ENCODE measurements at regions of chr5 and their contacts with region 1.

Region 1: GRCh38 chr5:163408311-163408923 is 29.0 kb upstream of the CCNG1 start:
- H3K4me3 Mint-ChIP-seq: no peak overlapping the region
- H3K27ac Mint-ChIP-seq: no peak overlapping the region
- H3K4me1 Mint-ChIP-seq: peaks cover 20% of the 10 kb centered on the region
- H3K27me3 Mint-ChIP-seq: peaks cover under 1% of the 10 kb centered on the region

Region 2: DNA sequence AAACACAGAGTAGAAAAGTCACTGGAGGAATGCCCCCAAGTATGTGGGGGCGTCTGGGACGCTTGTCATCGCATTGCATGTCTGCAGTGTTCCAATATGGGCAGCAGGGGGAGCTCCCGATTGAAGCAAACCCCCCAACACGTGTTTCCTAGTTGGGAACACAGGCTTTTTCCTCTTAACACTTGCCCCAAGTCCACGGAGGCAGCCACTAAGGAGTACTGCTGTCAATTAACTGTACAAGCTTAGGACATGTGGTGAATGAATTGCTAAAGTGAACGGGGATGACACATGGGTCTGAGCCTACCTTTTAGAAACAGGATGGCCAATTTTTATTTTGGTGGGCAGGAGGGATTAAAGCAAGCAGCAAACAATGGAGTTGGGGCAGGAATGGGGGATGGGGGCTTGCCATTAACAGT is 1864.1 kb before region 1 on chr5:
- intact Hi-C with region 1: loop called (anchors 2 kb)
- H3K4me3 Mint-ChIP-seq: no peak overlapping the region
- H3K27ac Mint-ChIP-seq: no peak overlapping the region
- H3K4me1 Mint-ChIP-seq: peaks cover 26% of the 10 kb centered on the region
- H3K27me3 Mint-ChIP-seq: peaks cover 48% of the 10 kb centered on the region

Region 3: GRCh38 chr5:161851691-161852299 is 1556.6 kb before region 1 on chr5:
- intact Hi-C with region 1: loop called (anchors 10 kb)
- H3K4me3 Mint-ChIP-seq: no peak overlapping the region
- H3K27ac Mint-ChIP-seq: no peak overlapping the region
- H3K4me1 Mint-ChIP-seq: no peaks in the 10 kb centered on the region
- H3K27me3 Mint-ChIP-seq: peaks cover 28% of the 10 kb centered on the region

Region 4: GRCh38 chr5:162209005-162209605 is 1199.3 kb before region 1 on chr5:
- intact Hi-C with region 1: loop called (anchors 5 kb)
- H3K4me3 Mint-ChIP-seq: no peak overlapping the region
- H3K27ac Mint-ChIP-seq: no peak overlapping the region
- H3K4me1 Mint-ChIP-seq: no peaks in the 10 kb centered on the region
- H3K27me3 Mint-ChIP-seq: no peaks in the 10 kb centered on the region

Region 5: DNA sequence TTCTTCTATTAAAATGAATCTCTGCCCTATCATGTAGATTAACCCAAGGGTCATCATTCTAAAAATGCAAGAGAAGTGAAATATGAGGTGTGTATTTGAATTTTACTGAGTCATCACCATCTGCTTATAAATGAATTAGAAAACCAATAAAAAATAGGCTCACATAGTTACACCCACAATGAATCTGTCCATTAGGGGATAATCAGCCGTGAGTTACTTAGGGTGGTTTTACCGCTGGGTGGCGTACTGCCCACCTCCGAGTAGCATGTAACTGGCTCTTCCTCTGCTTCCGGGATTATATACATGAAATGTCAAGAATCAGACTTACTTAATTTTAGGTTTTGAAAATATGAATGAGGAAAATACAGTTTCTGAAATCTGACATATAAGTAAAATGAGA is 304.0 kb before region 1 on chr5:
- intact Hi-C with region 1: loop called (anchors 10 kb)
- H3K4me3 Mint-ChIP-seq: no peak overlapping the region
- H3K27ac Mint-ChIP-seq: no peak overlapping the region
- H3K4me1 Mint-ChIP-seq: no peaks in the 10 kb centered on the region
- H3K27me3 Mint-ChIP-seq: no peaks in the 10 kb centered on the region

Region 6: GRCh38 chr5:163306421-163306820 is 102.0 kb before region 1 on chr5:
- intact Hi-C with region 1: loop called (anchors 5 kb)
- H3K4me3 Mint-ChIP-seq: no peak overlapping the region
- H3K27ac Mint-ChIP-seq: no peak overlapping the region
- H3K4me1 Mint-ChIP-seq: peaks cover 17% of the 10 kb centered on the region
- H3K27me3 Mint-ChIP-seq: peaks cover 12% of the 10 kb centered on the region

Region 7: GRCh38 chr5:163347671-163348070 is 60.7 kb before region 1 on chr5:
- intact Hi-C with region 1: loop called (anchors 5 kb)
- H3K4me3 Mint-ChIP-seq: no peak overlapping the region
- H3K27ac Mint-ChIP-seq: no peak overlapping the region
- H3K4me1 Mint-ChIP-seq: peaks cover 37% of the 10 kb centered on the region
- H3K27me3 Mint-ChIP-seq: peaks cover 2% of the 10 kb centered on the region